ENCODE measurements at regions of chr9 and their contacts with region 1.

Region 1: GRCh38 chr9:34701769-34702736 is 7.9 kb downstream of the CCL21 start:
- DNase-seq: peak; percentile 84
- H3K4me3 ChIP-seq: peak overlapping the region; percentile 46 to 73 (median 66)
- H3K27ac ChIP-seq: no peak overlapping the region
- H3K4me1 ChIP-seq: peaks cover 4% of the 10 kb centered on the region
- H3K27me3 ChIP-seq: peaks cover 18 to 30% of the 10 kb centered on the region in 2 experiments
- CTCF ChIP-seq: peak; percentile 97 to 99
- POLR2A ChIP-seq: no peak

Region 2: DNA sequence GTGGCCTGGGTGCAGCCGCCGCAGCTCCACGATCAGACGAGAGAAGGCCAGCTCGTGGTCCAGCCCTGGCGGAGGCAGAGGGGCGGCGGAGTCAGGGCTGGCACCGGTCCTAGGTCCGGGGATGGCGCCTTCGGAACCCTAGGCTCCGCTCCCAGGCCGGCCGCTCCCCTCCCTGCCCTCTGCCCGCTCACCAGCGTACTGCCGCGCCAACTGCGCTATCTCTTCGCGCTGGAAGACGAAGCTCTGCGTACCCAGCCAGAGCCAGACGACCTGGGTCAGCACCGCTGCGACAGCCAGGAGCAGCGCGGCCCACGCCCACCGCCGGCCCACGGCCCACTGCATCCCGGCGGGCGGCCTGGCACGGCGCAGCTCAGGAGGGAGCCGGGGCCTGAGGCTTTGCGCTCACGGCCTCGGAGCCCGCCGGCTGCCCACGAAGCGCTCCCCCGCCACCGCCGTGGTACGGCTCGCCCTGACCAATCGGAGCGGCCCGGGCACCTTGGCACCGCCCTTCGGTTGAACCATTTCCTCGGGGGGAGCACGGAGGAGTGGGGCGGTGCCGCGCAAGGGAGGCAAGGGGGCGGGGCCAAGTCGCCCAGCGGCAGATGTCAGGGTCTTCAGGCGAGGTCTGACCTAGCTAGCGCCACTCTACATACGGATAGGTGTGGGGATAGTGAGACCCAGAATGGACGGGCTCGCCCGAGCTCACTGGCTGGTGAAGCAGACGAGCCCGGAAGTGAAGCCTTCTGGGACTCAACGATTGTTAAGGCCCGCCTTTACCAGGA is 64.5 kb before region 1 on chr9 and contains the start of gene SIGMAR1:
- CTCF ChIA-PET with region 1: interaction called, 13 read pairs
- POLR2A ChIA-PET with region 1: no interaction called
- dilution Hi-C with region 1: no loop called
- intact Hi-C with region 1: no loop called
- DNase-seq: peak; percentile 91
- H3K4me3 ChIP-seq: peak within 1 kb of the TSS; percentile 10 to 63 (median 47)
- H3K27ac ChIP-seq: peak within 1 kb of the TSS; percentile 33
- H3K4me1 ChIP-seq: peaks cover 16% of the 10 kb centered on the region
- H3K27me3 ChIP-seq: no peaks in the 10 kb centered on the region
- CTCF ChIP-seq: no peak
- POLR2A ChIP-seq: peak; percentile 81
- total RNA-seq, gene SIGMAR1: 74.1 and 81.2 TPM in 2 replicates

Region 3: DNA sequence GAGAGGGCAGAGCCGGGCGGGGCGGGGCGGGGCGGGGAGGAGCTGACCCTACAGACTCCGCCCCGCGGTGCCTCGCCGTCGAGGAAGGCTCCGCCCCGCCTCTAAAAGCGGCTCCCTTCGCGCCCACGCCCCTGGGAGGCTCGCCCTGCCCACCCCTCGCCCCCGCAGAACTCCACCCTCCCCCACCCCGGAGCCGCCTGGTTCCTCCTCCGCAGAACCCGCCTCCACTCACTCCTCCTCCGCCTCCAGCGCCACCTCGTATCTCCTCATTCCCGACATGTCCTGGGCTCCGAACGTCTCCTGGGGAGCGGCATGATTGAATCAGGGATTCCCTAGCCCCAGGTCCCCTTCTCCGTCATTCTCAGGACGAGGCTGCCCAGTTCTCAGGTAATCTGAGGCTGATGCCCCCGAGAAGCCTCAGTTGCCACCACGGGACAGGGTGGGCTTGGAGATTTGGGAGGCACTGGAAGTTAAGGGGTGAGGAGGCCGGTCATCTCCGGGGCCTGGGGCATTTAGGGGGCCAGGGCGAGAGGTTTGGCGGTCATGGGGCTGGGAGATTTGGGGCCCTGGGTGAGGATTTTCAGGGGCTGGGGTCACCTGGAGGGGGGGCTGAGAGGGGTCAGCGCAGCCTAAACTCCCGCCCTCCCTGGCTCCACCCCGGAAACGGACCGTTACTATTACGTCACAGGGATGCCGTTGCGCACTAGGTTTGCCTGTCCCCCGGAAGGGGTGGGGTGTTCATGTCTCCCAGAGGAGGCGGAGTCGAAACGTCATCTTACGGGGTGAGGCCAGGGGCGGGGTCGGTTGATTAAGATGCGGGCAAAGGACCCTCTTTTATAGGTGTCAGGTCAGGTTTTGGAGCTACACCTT is 36.4 kb before region 1 on chr9:
- CTCF ChIA-PET with region 1: interaction called, 15 read pairs
- POLR2A ChIA-PET with region 1: no interaction called
- dilution Hi-C with region 1: no loop called
- intact Hi-C with region 1: no loop called
- DNase-seq: peak; percentile 79
- H3K4me3 ChIP-seq: peak overlapping the region; percentile 49 to 69 (median 64)
- H3K27ac ChIP-seq: peak overlapping the region; percentile 78
- H3K4me1 ChIP-seq: peaks cover 5% of the 10 kb centered on the region
- H3K27me3 ChIP-seq: no peaks in the 10 kb centered on the region
- CTCF ChIP-seq: no peak
- POLR2A ChIP-seq: peak; percentile 71

Region 4: GRCh38 chr9:34675048-34675714 is 26.9 kb before region 1 on chr9:
- CTCF ChIA-PET with region 1: interaction called, 92 read pairs
- POLR2A ChIA-PET with region 1: no interaction called
- dilution Hi-C with region 1: no loop called
- intact Hi-C with region 1: loop called (anchors 1 kb)
- DNase-seq: peak; percentile 72
- H3K4me3 ChIP-seq: no peak overlapping the region
- H3K27ac ChIP-seq: no peak overlapping the region
- H3K4me1 ChIP-seq: no peaks in the 10 kb centered on the region
- H3K27me3 ChIP-seq: no peaks in the 10 kb centered on the region
- CTCF ChIP-seq: peak; percentile 86 to 94
- POLR2A ChIP-seq: no peak

Region 5: DNA sequence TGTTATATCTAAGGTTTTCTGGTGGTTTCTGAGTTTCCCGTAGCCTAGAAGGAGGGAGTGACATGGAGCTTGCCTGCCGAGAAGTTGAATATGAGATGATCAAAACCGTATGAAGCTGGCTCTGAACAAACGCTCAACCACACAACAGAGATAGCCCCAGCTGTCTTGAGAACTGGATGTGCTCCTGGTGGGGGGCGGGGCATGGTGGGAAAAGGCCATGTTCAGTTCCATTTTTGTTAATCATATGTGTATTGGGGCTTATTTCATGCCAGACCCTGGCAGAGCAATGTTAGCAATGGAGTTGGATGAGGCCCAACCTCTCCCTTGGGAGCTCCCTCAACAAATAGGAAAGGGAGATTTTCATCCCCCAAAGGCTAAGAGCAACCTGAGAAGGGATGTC is 15.8 kb before region 1 on chr9:
- CTCF ChIA-PET with region 1: interaction called, 17 read pairs
- POLR2A ChIA-PET with region 1: no interaction called
- dilution Hi-C with region 1: no loop called
- intact Hi-C with region 1: no loop called
- DNase-seq: no peak
- H3K4me3 ChIP-seq: no peak overlapping the region
- H3K27ac ChIP-seq: no peak overlapping the region
- H3K4me1 ChIP-seq: no peaks in the 10 kb centered on the region
- H3K27me3 ChIP-seq: peaks cover 4 to 7% of the 10 kb centered on the region in 2 experiments
- CTCF ChIP-seq: no peak
- POLR2A ChIP-seq: no peak

Region 6: GRCh38 chr9:34690983-34691935 is 10.8 kb before region 1 on chr9 and contains the start of gene CCL19:
- CTCF ChIA-PET with region 1: interaction called, 17 read pairs
- POLR2A ChIA-PET with region 1: no interaction called
- dilution Hi-C with region 1: no loop called
- intact Hi-C with region 1: no loop called
- DNase-seq: no peak
- H3K4me3 ChIP-seq: no peak within 1 kb of the TSS
- H3K27ac ChIP-seq: no peak within 1 kb of the TSS
- H3K4me1 ChIP-seq: no peaks in the 10 kb centered on the region
- H3K27me3 ChIP-seq: peaks cover 4 to 7% of the 10 kb centered on the region in 2 experiments
- CTCF ChIP-seq: no peak
- POLR2A ChIP-seq: no peak
- total RNA-seq, gene CCL19: not detected in 2 replicates

Region 7: DNA sequence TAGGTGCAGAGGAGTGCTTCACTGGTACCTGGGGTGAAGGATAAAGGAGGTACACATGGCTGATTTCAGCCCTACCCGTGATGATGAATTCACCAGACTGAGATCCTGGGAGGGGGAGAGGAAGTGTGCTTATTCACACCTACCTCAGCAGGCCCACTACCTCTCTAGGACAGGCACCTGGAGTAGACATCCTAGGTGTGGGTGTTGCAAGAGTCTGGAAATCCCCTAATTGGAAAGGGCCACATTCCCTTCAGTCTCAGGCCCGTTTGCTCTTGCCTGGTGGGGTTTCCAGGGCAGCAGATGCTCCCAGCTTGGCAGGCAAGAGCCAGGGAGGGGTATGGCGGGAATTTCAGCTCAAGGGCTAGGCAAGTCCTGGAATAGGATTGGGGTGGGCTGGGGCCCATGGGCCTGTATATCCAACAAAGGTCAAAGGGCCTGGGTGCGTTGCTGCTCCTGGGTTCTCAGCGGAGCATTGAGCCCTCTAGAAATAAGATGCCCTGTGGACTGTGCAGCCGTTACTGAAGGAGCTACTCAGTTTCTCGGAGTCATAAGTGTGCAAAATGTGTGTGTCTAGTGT is 13.7 kb after region 1 on chr9:
- CTCF ChIA-PET with region 1: interaction called, 26 read pairs
- POLR2A ChIA-PET with region 1: no interaction called
- dilution Hi-C with region 1: no loop called
- intact Hi-C with region 1: no loop called
- DNase-seq: no peak
- H3K4me3 ChIP-seq: no peak overlapping the region
- H3K27ac ChIP-seq: no peak overlapping the region
- H3K4me1 ChIP-seq: no peaks in the 10 kb centered on the region
- H3K27me3 ChIP-seq: peaks cover 15 to 22% of the 10 kb centered on the region in 2 experiments
- CTCF ChIP-seq: no peak
- POLR2A ChIP-seq: no peak